ENCODE measurements at regions of chr2 and their contacts with region 1.

Region 1: DNA sequence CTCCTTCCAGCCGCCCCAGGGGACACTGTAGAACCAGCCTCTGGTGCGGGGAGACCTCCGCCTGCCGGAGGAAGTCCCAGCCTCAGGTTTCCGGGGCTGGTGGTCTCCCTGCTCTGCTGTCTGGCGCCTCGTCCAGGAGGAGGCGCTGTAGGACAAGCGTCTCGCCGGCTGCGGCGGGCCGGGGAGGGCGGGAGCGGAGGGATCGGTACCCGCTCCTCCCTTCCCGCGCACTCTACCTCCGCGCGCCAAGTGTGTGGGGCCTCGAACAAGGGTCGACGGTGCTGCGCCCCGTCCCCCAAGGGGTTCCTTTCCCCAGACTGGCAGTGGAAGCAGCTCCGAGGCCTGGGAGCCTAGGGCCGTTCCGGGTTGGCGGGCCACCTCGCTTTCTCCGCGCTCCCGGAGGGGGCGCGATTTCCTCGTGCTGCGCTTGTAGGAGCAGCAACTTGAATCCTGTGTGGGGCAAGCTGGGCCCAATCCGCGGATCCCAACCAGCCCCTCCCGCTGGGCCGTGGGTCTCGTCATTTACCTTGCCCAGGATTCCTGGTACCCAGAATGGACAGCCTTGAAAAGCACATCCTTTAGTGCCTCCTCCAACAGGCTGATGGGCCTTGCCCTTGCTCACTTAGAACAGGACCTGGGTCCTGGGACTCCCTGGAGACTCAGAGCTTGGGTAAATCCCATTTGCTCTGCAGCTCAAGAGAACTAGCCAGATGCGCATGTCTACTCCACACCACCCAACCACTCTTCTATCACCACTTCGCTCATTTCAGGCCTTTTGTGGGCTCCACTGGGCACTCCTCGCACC is 10.6 kb upstream of the HOXD4 start:
- DNase-seq: peak; percentile 53
- H3K4me3 ChIP-seq: peak overlapping the region; percentile 65 to 74 (median 70)
- H3K27ac ChIP-seq: no peak overlapping the region
- H3K4me1 ChIP-seq: peaks cover 15% of the 10 kb centered on the region
- H3K27me3 ChIP-seq: peaks cover 29% of the 10 kb centered on the region
- CTCF ChIP-seq: peak; percentile 57 to 87

Region 2: DNA sequence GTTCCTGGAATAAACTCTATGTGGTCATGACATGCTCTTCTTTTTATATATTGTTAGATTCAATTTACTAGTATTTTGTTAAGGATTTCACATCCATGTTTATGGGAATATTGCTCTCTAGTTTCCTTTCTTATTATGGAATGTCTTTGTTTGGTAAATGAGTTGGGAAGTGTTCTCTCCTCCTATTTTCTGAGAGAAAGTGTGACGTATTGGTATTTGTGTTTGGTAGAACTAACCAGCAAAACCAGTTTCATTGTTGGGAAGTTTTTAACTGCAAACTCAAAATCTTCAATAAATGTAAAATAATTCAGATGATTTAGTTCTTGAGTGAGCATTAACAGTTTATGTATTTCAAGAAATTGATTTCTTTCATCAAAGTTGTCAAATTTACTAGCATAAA is 127.3 kb before region 1 on chr2:
- CTCF ChIA-PET with region 1: no interaction called
- dilution Hi-C with region 1: no loop called
- in situ Hi-C with region 1: no loop called
- intact Hi-C with region 1: no loop called
- DNase-seq: no peak
- H3K4me3 ChIP-seq: no peak overlapping the region
- H3K27ac ChIP-seq: no peak overlapping the region
- H3K4me1 ChIP-seq: no peaks in the 10 kb centered on the region
- H3K27me3 ChIP-seq: no peaks in the 10 kb centered on the region
- CTCF ChIP-seq: no peak

Region 3: DNA sequence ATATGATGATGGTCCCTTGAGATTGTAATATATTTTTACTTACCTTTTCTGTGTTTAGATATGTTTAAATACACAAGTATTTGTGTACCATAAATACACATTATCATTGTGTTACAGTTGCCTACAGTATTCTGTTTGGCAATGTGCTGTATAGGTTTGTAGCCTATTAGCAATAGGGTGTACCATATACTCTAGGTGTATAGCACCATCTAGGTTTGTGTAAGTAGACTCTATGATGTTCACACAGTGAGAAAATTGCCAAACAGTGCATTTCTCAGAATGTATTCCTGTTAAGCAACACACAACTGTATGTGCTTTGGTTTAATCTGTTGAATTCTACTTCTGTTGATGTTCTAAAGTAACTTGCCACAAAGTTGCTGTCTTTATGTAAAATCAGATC is 193.0 kb after region 1 on chr2:
- CTCF ChIA-PET with region 1: no interaction called
- dilution Hi-C with region 1: no loop called
- in situ Hi-C with region 1: no loop called
- intact Hi-C with region 1: loop called (anchors 10 kb)
- DNase-seq: no peak
- H3K4me3 ChIP-seq: no peak overlapping the region
- H3K27ac ChIP-seq: no peak overlapping the region
- H3K4me1 ChIP-seq: no peaks in the 10 kb centered on the region
- H3K27me3 ChIP-seq: no peaks in the 10 kb centered on the region
- CTCF ChIP-seq: no peak

Region 4: GRCh38 chr2:176554101-176555048 is 413.7 kb after region 1 on chr2:
- CTCF ChIA-PET with region 1: interaction called, 5 read pairs
- dilution Hi-C with region 1: no loop called
- in situ Hi-C with region 1: loop called (anchors 5 to 10 kb)
- intact Hi-C with region 1: loop called (anchors 1 kb)
- DNase-seq: peak; percentile 34
- H3K4me3 ChIP-seq: peak overlapping the region; percentile 49 to 54 (median 49)
- H3K27ac ChIP-seq: no peak overlapping the region
- H3K4me1 ChIP-seq: peaks cover 16% of the 10 kb centered on the region
- H3K27me3 ChIP-seq: peaks cover 8% of the 10 kb centered on the region
- CTCF ChIP-seq: peak; percentile 58 to 73

Region 5: DNA sequence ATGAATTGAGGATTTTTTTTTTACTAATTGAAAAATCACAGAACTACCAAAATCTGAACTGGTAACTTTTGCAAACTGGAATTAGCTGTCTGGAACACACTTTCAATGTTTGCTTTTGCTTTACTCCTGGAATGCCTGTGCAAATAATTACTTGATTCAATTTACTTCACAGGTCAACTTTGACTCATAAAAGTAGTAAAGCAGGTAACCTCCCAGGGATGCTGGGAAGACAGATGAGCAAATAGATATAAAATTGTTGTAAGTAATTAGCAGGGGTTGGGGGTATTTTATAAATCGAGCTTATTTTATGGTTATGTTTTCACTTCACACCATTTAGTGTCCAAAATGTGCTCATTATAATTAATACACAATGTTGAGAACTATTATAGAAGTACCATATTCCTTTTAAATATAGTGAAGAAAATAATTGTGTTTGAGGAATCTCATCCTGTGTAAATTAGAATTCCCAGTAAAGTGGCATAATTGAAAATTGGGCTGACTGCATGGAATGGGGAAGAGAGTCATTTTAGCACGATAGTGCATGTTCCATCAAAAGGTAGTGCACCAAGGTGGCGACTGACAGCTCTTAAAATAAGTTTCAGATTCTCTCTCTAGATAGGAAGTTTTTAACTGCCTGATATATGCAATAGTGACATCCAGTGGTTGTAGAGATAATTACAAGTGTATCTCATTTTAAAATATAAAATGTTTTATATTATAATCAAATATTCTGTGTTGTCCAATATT is 673.8 kb after region 1 on chr2:
- CTCF ChIA-PET with region 1: no interaction called
- dilution Hi-C with region 1: no loop called
- in situ Hi-C with region 1: loop called (anchors 25 kb)
- intact Hi-C with region 1: no loop called
- DNase-seq: no peak
- H3K4me3 ChIP-seq: no peak overlapping the region
- H3K27ac ChIP-seq: no peak overlapping the region
- H3K4me1 ChIP-seq: no peaks in the 10 kb centered on the region
- H3K27me3 ChIP-seq: peaks cover 2% of the 10 kb centered on the region
- CTCF ChIP-seq: peak; percentile 39 to 53

Region 6: GRCh38 chr2:176873405-176873804 is 732.7 kb after region 1 on chr2:
- CTCF ChIA-PET with region 1: no interaction called
- dilution Hi-C with region 1: no loop called
- in situ Hi-C with region 1: no loop called
- intact Hi-C with region 1: no loop called
- DNase-seq: no peak
- H3K4me3 ChIP-seq: no peak overlapping the region
- H3K27ac ChIP-seq: no peak overlapping the region
- H3K4me1 ChIP-seq: no peaks in the 10 kb centered on the region
- H3K27me3 ChIP-seq: peaks cover 2% of the 10 kb centered on the region
- CTCF ChIP-seq: peak; percentile 18 to 24

Measured in mammary epithelial cell (primary cell).